ENCODE measurements at regions of chr6 and their contacts with region 1.

Region 1: DNA sequence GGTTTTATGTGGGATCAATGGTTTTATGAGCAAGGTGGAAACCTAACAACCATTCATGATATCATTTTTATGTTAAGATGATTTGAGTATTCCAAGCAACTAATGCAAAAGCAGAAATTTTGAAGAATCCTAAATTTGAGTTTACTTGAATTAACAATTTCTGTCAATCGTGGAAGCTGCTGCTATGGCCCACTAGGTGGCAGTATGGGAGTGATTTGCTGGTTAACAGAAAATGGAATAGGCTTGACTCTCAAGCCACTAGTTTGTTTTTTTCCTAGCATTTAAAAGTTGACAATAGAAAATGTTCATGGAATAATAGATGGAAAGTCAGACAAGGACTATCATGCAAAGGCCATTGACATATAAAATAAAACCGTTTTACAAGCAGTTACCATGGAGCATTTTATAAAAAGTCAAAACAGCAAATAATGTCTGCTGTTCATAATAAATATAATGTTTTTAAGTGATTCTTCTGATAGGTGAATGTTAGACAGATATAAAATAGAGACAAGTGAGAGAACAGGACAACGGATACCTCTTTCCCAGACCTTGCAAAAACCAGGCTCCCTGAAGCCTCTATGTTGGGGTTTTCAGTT is 43.0 kb upstream of the TMEM200A start:
- DNase-seq: peak; percentile 31
- H3K4me3 ChIP-seq: no peak overlapping the region
- H3K27ac ChIP-seq: no peak overlapping the region
- H3K4me1 ChIP-seq: peaks cover 4% of the 10 kb centered on the region
- H3K27me3 ChIP-seq: no peaks in the 10 kb centered on the region
- CTCF ChIP-seq: peak; percentile 90 to 98

Region 2: GRCh38 chr6:130676077-130676772 is 353.5 kb after region 1 on chr6:
- CTCF ChIA-PET with region 1: no interaction called
- dilution Hi-C with region 1: no loop called
- in situ Hi-C with region 1: no loop called
- intact Hi-C with region 1: loop called (anchors 2 kb)
- DNase-seq: no peak
- H3K4me3 ChIP-seq: no peak overlapping the region
- H3K27ac ChIP-seq: no peak overlapping the region
- H3K4me1 ChIP-seq: peaks cover 20% of the 10 kb centered on the region
- H3K27me3 ChIP-seq: no peaks in the 10 kb centered on the region
- CTCF ChIP-seq: peak in 1 of 2 donors; percentile 41

Region 3: DNA sequence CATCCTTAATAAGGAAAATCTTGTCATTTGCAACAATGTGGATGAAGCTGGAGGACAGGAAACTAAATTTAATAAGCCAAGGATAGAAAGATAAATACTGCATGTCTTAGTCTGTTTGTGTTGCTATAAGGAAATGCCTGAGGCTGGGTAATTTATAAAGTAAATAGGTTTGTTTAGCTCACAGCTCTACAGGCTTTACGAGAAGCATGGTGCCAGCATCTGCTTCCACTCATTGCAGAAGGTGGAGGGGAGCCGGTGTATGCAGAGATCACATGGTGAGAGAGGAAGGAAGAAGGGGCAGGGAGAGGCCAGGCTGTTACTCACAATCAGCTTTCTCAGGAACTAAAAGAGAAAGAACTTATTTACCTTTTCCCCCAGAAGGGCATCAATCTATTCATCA is 385.6 kb after region 1 on chr6:
- CTCF ChIA-PET with region 1: no interaction called
- dilution Hi-C with region 1: no loop called
- in situ Hi-C with region 1: loop called (anchors 10 kb)
- intact Hi-C with region 1: no loop called
- DNase-seq: no peak
- H3K4me3 ChIP-seq: no peak overlapping the region
- H3K27ac ChIP-seq: no peak overlapping the region
- H3K4me1 ChIP-seq: no peaks in the 10 kb centered on the region
- H3K27me3 ChIP-seq: no peaks in the 10 kb centered on the region
- CTCF ChIP-seq: no peak

Region 4: GRCh38 chr6:130843575-130844320 is 521.0 kb after region 1 on chr6:
- CTCF ChIA-PET with region 1: no interaction called
- dilution Hi-C with region 1: no loop called
- in situ Hi-C with region 1: no loop called
- intact Hi-C with region 1: loop called (anchors 10 kb)
- DNase-seq: peak; percentile 23
- H3K4me3 ChIP-seq: no peak overlapping the region
- H3K27ac ChIP-seq: no peak overlapping the region
- H3K4me1 ChIP-seq: no peaks in the 10 kb centered on the region
- H3K27me3 ChIP-seq: no peaks in the 10 kb centered on the region
- CTCF ChIP-seq: peak; percentile 36 to 60